Activated CD4-positive, alpha-beta memory T cell treated with anti-CD3 and anti-CD28 coated beads for 36 hours (primary cell): ENCODE measurements at regions of chr2 and their contacts with region 1.

Region 1: DNA sequence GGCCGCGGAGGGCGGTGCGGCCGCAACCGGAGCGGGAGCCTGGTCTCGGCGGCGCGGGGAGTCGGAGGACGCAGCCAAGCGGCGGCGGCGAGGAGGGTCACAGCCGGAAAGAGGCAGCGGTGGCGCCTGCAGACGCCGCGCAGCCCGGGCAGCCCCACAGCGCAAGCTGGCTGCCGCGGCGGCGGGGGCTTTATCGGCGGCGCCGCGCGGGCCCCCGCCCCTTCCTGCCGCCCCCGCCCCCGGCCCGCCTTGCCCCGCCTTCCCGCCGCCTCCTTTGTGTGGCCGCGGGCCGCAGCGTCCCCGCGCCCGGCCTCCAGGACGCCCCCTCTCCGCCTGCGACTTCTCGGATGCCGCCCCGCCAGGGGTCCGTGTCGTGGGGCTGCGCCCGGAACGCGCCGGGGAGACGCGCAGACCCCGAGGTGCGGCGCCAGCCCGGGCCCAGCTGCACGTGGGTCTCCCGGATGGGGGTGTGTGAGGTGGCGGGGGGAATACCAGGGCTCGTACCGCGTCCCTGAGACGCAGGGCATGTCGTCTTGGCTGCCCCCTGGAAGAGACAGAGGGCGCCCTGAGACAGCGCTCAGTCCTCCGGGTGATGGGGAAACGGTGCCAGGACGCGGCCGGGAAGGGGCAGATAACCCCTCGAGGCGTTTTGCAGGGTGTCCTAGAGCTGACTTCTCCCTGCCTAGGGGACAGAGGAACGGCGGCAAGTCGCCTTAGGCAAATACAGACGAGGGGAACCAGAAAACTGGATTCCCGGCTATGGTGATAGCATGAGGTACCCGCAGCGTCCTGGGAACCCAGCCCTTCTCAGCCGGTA is at the start of gene SERPINE2:
- DNase-seq: peak; percentile 65
- H3K4me3 Mint-ChIP-seq: peak within 1 kb of the TSS; percentile 83
- H3K27ac Mint-ChIP-seq: no peak within 1 kb of the TSS
- H3K4me1 Mint-ChIP-seq: peaks cover 12% of the 10 kb centered on the region
- H3K27me3 Mint-ChIP-seq: peaks cover 51% of the 10 kb centered on the region
- total RNA-seq, gene SERPINE2: 16.4 to 16.5 TPM

Region 2: GRCh38 chr2:223696719-223697118 is 342.6 kb before region 1 on chr2:
- CTCF ChIA-PET with region 1: no interaction called
- POLR2A ChIA-PET with region 1: no interaction called
- intact Hi-C with region 1: loop called (anchors 5 kb)
- DNase-seq: no peak
- H3K4me3 Mint-ChIP-seq: no peak overlapping the region
- H3K27ac Mint-ChIP-seq: no peak overlapping the region
- H3K4me1 Mint-ChIP-seq: peaks cover 10% of the 10 kb centered on the region
- H3K27me3 Mint-ChIP-seq: peaks cover 2% of the 10 kb centered on the region

Region 3: DNA sequence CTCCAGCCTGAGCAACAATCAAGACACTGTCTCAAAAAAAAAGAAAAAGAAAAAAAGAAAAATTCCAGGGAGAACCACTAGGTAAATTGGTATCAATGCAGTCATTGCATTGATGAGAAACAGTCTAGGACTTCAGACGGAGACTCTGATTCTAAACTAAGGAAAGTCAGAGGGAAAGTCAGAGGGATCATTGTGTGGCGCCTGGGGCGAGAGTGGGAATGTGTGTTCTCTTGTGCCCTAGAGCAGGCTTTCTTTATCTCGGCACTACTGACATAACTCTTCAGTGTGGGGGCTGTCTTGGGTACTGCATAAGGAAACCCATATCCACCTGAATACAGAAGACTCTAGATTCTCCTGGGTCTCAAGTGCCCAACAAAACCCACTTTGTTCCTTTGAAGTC is 25.0 kb before region 1 on chr2:
- CTCF ChIA-PET with region 1: no interaction called
- POLR2A ChIA-PET with region 1: no interaction called
- intact Hi-C with region 1: no loop called
- DNase-seq: no peak
- H3K4me3 Mint-ChIP-seq: no peak overlapping the region
- H3K27ac Mint-ChIP-seq: no peak overlapping the region
- H3K4me1 Mint-ChIP-seq: peaks cover 13% of the 10 kb centered on the region
- H3K27me3 Mint-ChIP-seq: no peaks in the 10 kb centered on the region

Region 4: DNA sequence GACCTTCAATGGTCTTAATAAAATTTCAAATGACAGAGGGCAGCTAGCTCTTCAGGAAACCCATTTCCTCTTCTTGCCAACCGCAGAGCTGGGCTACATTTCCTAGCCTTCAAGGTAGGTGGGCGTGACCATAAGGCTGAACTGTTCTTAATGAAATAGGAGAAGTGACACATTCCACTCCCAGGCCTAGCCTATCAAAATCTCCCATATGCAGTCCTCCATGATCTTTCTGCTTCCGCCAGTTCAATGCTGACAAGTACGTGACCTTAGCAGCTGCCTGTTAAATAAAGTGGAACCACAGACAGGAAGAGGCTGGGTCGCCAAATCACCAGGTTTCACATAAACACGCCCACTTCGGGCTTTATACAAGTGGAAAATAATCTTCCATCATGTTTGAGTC is 13.5 kb before region 1 on chr2:
- CTCF ChIA-PET with region 1: interaction called, 4 read pairs
- POLR2A ChIA-PET with region 1: no interaction called
- intact Hi-C with region 1: loop called (anchors 1 kb)
- DNase-seq: peak; percentile 77
- H3K4me3 Mint-ChIP-seq: peak overlapping the region; percentile 30
- H3K27ac Mint-ChIP-seq: peak overlapping the region; percentile 85
- H3K4me1 Mint-ChIP-seq: peaks cover 48% of the 10 kb centered on the region
- H3K27me3 Mint-ChIP-seq: no peaks in the 10 kb centered on the region

Region 5: DNA sequence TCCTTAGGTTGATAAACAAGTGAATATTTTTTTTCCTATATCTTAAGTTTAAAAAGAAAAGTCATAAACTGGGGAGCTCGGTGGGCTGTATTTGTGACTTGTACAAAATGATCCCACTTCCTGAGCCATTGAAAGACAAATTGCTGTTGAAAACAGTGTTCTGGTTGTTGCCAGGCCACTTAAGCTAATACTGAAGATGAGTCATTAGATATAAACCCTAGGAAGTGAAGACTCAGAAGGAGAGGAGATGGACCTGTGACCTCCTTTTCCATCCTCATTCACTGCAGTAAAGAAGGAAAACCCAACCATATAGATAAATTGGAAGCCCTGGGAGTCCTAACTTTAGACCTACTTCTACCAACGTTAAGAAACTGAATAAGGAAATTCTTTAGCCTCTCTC is 45.9 kb after region 1 on chr2:
- CTCF ChIA-PET with region 1: no interaction called
- POLR2A ChIA-PET with region 1: no interaction called
- intact Hi-C with region 1: loop called (anchors 2 kb)
- DNase-seq: no peak
- H3K4me3 Mint-ChIP-seq: no peak overlapping the region
- H3K27ac Mint-ChIP-seq: no peak overlapping the region
- H3K4me1 Mint-ChIP-seq: peaks cover 6% of the 10 kb centered on the region
- H3K27me3 Mint-ChIP-seq: peaks cover 2% of the 10 kb centered on the region

Region 6: GRCh38 chr2:224221455-224221913 is 182.2 kb after region 1 on chr2:
- CTCF ChIA-PET with region 1: no interaction called
- POLR2A ChIA-PET with region 1: no interaction called
- intact Hi-C with region 1: no loop called
- DNase-seq: no peak
- H3K4me3 Mint-ChIP-seq: no peak overlapping the region
- H3K27ac Mint-ChIP-seq: no peak overlapping the region
- H3K4me1 Mint-ChIP-seq: no peaks in the 10 kb centered on the region
- H3K27me3 Mint-ChIP-seq: peaks cover 20% of the 10 kb centered on the region

Region 7: GRCh38 chr2:224284134-224284946 is 245.0 kb after region 1 on chr2:
- CTCF ChIA-PET with region 1: interaction called, 3 read pairs
- POLR2A ChIA-PET with region 1: no interaction called
- intact Hi-C with region 1: loop called (anchors 2 kb)
- DNase-seq: no peak
- H3K4me3 Mint-ChIP-seq: no peak overlapping the region
- H3K27ac Mint-ChIP-seq: no peak overlapping the region
- H3K4me1 Mint-ChIP-seq: no peaks in the 10 kb centered on the region
- H3K27me3 Mint-ChIP-seq: peaks cover 21% of the 10 kb centered on the region